GM10248 (cell line): ENCODE measurements at regions of chr10 and their contacts with region 1.

Region 1: DNA sequence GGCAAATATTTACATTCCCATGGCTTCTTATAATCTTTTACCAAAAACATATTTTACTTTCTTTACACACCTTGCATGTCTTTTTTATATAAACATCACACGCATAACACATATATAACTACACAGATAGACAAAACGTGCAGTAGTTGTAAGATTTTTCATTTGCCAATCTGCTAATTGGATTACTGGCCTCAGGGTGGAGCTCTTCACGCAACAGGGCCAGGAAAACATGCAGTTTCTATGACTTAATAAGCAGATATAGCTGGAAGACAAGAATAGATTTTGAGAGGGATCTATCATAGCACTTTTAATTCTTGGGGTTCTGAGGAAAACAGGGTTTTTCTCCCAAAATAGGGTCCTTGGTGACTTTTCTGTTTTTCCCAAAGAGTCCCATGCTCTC is 12.7 kb downstream of the ACADSB start:
- DNase-seq: no peak
- CTCF ChIP-seq: peak; percentile 49

Region 2: DNA sequence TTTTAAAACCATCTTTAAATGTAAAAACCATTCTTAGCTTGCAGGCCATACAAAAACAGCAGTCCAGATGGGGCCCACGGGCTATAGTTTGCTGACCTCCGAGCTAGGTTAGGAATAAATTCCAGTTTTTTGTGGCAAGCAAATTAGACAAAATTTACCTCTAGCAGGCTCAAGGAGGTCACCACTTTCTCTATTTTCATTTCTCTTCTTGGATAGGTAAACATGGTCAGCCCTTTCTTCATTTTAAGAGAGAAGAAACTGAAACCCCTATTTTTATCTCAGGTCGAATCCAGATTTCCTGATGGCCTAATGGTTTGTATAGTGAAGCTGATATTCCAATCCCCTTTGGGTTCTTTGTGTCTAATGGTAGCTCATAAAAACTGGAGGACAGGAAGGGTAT is 23.7 kb before region 1 on chr10:
- CTCF ChIA-PET with region 1: no interaction called
- POLR2A ChIA-PET with region 1: no interaction called
- DNase-seq: no peak
- CTCF ChIP-seq: no peak

Region 3: DNA sequence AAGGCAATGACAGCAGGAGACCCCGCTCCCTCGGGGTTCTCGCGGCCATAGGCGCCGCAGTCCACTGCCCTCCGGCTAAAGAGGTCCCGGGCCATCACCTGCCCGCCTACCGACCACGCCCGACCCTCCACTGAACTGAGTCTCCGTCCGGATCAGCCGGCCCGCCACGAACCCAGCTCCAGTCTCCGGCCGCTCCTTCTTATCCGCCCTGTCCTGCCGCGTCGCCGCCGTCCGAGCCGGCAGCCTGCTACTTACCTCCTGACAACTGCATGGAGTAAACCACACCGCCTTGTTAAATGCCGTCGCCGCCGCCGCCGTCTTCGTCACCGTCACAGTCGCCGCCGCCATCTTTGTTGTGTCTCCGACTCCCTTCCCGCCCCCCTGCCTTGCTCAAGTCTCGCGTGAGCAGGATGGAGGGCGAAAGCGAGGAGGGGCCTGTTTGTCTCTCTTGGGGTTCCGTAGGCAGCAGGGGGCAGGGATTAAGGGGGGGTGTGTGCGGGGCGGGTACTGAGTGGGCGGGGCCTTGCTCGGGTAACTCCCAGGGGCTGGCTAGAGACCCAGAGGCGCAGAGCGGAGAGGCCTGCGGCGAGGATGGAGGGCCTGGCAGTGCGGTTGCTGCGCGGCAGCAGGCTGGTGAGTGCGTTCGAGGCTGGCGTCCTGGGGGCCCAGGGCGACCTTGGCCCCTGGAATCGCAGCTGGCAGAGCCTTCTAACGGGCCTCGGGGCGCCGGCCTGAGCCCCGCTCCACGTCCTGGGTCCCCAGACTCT is 12.9 kb before region 1 on chr10 and contains the starts of genes ACADSB and IKZF5:
- CTCF ChIA-PET with region 1: interaction called, 16 read pairs
- POLR2A ChIA-PET with region 1: interaction called, 3 read pairs
- DNase-seq: peak; percentile 100
- CTCF ChIP-seq: no peak

Region 4: DNA sequence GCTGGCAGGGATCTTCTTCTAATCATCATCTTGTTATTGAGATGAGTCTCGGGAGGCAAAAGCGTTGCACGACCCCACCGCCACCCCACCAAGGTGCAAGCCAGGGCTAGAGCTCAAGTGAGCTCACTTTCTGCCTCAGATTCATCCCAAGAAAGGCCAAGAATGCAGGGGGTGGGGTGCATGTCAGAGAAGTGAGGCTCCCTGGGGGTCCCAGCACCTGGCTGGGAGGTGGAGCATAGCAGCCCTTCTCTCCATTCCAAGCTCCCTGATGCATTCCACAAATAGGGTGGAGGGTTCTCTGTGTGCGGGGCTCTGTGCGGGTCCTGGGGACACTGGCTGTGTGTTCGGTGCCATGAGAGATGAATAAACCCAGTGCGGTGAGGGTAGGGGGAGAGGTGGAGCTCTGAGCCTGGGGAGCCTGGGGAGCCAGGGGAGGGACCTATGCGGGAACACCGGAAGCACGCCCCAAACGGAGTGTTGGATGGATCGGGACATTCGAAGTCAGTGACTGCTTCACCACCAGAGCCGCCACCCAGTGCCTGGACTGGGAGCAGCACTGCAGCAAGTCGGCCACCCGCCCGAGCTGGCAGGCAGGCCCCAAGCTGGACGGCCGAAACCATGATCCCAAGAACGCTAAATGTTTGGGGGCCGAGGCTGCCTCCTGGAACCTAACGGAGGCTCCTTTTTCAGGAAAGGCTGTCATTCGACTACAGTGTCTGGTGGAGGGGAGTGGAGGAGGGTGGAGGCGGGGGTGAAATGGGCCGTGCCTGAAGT is 96.3 kb after region 1 on chr10:
- CTCF ChIA-PET with region 1: no interaction called
- POLR2A ChIA-PET with region 1: no interaction called
- DNase-seq: no peak
- CTCF ChIP-seq: no peak